GM12878 (cell line): ENCODE measurements at regions of chrX and their contacts with region 1.

Region 1: DNA sequence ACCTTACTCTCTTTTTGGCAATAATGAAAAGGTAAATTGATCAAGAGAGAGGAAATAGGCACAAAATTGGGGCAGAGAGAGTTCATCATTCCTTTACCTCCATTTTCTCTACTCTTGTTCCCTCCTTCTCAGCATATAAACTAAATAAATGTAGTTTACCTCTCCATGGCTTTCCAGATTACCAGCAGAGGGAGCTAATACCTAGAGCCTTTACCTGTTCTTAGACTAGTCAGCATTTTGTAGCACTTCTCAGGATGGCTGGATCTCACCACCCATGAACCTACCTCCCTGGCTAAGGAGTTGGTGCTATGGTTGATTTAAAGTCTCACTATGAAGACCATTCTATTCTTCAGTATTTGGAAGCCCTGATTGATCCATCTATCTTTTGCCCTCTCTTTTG is 15.7 kb downstream of the OFD1 start:
- DNase-seq: no peak
- ATAC-seq: peak; percentile 77
- H3K4me3 ChIP-seq: no peak overlapping the region
- H3K27ac ChIP-seq: peak overlapping the region; percentile 57; the same call in 1 of the 2 replicates
- H3K4me1 ChIP-seq: peaks cover 36% of the 10 kb centered on the region
- H3K27me3 ChIP-seq: no peaks in the 10 kb centered on the region
- CTCF ChIP-seq: peak; percentile 65 to 74 (median 70)
- EP300 ChIP-seq: no peak
- POLR2A ChIP-seq: no peak
- RAD21 ChIP-seq: peak; percentile 72

Region 2: GRCh38 chrX:13658602-13659001 is 91.6 kb before region 1 on chrX:
- CTCF ChIA-PET with region 1: interaction called, 11 read pairs
- POLR2A ChIA-PET with region 1: interaction called, 5 read pairs
- RAD21 ChIA-PET with region 1: interaction called, 11 read pairs
- SMC1A ChIA-PET with region 1: interaction called, 75 read pairs
- in situ Hi-C with region 1: loop called (anchors 5 kb)
- intact Hi-C with region 1: loop called (anchors 1 kb)
- DNase-seq: no peak
- ATAC-seq: peak; percentile 66
- H3K4me3 ChIP-seq: no peak overlapping the region
- H3K27ac ChIP-seq: peak overlapping the region; percentile 73
- H3K4me1 ChIP-seq: peaks cover 14% of the 10 kb centered on the region
- H3K27me3 ChIP-seq: no peaks in the 10 kb centered on the region
- CTCF ChIP-seq: peak; percentile 59 to 72 (median 68)
- EP300 ChIP-seq: no peak
- POLR2A ChIP-seq: no peak
- RAD21 ChIP-seq: peak; percentile 93

Region 3: GRCh38 chrX:13699183-13699826 is 50.9 kb before region 1 on chrX:
- CTCF ChIA-PET with region 1: interaction called, 35 read pairs
- POLR2A ChIA-PET with region 1: interaction called, 9 read pairs
- RAD21 ChIA-PET with region 1: interaction called, 175 read pairs
- SMC1A ChIA-PET with region 1: interaction called, 198 read pairs
- in situ Hi-C with region 1: no loop called
- intact Hi-C with region 1: no loop called
- DNase-seq: no peak
- ATAC-seq: peak; percentile 53
- H3K4me3 ChIP-seq: peak overlapping the region; percentile 37; the same call in 1 of the 2 replicates
- H3K27ac ChIP-seq: peak overlapping the region; percentile 69
- H3K4me1 ChIP-seq: peaks cover 38% of the 10 kb centered on the region
- H3K27me3 ChIP-seq: no peaks in the 10 kb centered on the region
- CTCF ChIP-seq: no peak
- EP300 ChIP-seq: no peak
- POLR2A ChIP-seq: no peak
- RAD21 ChIP-seq: no peak

Region 4: DNA sequence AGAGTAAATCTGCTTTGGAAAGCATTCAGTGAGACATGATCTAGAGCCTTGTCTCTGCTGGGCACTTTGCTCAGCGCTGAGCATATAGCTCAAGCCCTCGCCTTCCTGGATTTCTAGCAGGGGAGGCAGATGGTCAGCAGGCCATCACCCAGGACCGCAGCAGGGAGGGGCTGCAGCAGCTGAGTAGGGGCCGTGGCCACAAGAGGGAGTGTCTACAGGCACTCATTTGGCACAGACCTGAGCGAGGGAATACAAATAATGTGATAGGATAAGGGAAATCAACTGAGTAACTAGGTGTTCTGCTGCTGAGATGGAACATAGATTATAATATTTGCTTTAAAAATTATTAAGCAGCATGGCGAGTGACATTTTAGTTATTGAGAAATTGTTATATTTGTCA is 14.6 kb after region 1 on chrX:
- CTCF ChIA-PET with region 1: interaction called, 95 read pairs
- POLR2A ChIA-PET with region 1: interaction called, 6 read pairs
- RAD21 ChIA-PET with region 1: interaction called, 57 read pairs
- SMC1A ChIA-PET with region 1: interaction called, 43 read pairs
- in situ Hi-C with region 1: no loop called
- intact Hi-C with region 1: loop called (anchors 1 kb)
- DNase-seq: no peak
- ATAC-seq: no peak
- H3K4me3 ChIP-seq: no peak overlapping the region
- H3K27ac ChIP-seq: no peak overlapping the region
- H3K4me1 ChIP-seq: peaks cover 14% of the 10 kb centered on the region
- H3K27me3 ChIP-seq: no peaks in the 10 kb centered on the region
- CTCF ChIP-seq: no peak
- EP300 ChIP-seq: no peak
- POLR2A ChIP-seq: no peak
- RAD21 ChIP-seq: no peak

Region 5: DNA sequence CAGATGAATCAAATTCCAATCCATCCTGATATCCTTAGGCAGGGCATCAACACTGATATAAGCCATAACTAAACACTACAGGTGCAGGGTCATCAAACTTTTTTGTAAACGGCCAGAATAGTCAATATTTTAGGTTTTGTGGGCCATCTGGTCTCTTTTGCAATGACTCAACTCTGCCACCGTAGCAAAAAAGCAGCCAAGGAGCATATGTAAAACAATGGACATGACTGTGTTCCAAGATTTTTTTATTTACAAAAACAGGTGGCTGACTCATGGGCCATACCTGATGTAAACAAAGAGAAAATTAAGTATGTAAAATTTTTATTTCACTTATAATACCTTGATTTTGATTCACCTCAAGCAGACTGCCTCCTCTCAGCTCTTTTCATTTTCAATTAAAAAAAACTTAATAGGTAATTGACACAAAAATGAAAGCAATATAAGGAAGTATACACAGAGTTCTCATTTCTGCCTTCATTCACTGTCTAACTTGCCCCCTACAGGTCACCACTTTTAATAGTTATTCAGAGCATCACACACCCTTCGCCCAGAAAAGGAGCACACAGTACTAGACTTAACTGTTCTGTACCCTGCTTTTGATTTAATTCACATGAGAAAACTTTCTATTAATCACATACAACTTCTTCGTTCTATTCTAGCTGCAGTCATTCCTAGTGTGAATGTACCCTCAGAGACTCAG is 101.9 kb after region 1 on chrX:
- CTCF ChIA-PET with region 1: interaction called, 8 read pairs
- POLR2A ChIA-PET with region 1: no interaction called
- RAD21 ChIA-PET with region 1: interaction called, 14 read pairs
- SMC1A ChIA-PET with region 1: interaction called, 12 read pairs
- in situ Hi-C with region 1: no loop called
- intact Hi-C with region 1: loop called (anchors 1 kb)
- DNase-seq: no peak
- ATAC-seq: peak; percentile 90
- H3K4me3 ChIP-seq: no peak overlapping the region
- H3K27ac ChIP-seq: no peak overlapping the region
- H3K4me1 ChIP-seq: peaks cover 5% of the 10 kb centered on the region; the same call in 1 of the 2 replicates
- H3K27me3 ChIP-seq: no peaks in the 10 kb centered on the region
- CTCF ChIP-seq: peak; percentile 39 to 47 (median 44)
- EP300 ChIP-seq: no peak
- POLR2A ChIP-seq: no peak
- RAD21 ChIP-seq: peak; percentile 27